CD4-positive, alpha-beta memory T cell (primary cell): ENCODE measurements at regions of chr7 and their contacts with region 1.

Region 1: GRCh38 chr7:8295638-8296361 is 33.8 kb upstream of the ICA1 start:
- DNase-seq: peak; percentile 44 to 54 (median 52)
- H3K4me3 ChIP-seq: no peak overlapping the region
- H3K4me3 Mint-ChIP-seq: no peak overlapping the region
- H3K27ac ChIP-seq: no peak overlapping the region
- H3K27ac Mint-ChIP-seq: no peak overlapping the region
- H3K4me1 ChIP-seq: no peaks in the 10 kb centered on the region
- H3K4me1 Mint-ChIP-seq: peaks cover 0 to 1% (median 0%) of the 10 kb centered on the region in 4 donors
- H3K27me3 ChIP-seq: no peaks in the 10 kb centered on the region
- H3K27me3 Mint-ChIP-seq: peaks cover 8 to 12% of the 10 kb centered on the region in 2 donors

Region 2: GRCh38 chr7:7424151-7424873 is 871.5 kb before region 1 on chr7:
- CTCF ChIA-PET with region 1: no interaction called
- POLR2A ChIA-PET with region 1: no interaction called
- intact Hi-C with region 1: loop called (anchors 10 kb)
- DNase-seq: peak in 4 of 5 donors; percentile 6 to 32 (median 29)
- H3K4me3 ChIP-seq: peak overlapping the region; percentile 33 to 41
- H3K4me3 Mint-ChIP-seq: peak overlapping the region in 7 of 8 donors; percentile 81 to 89 (median 85)
- H3K27ac ChIP-seq: no peak overlapping the region
- H3K27ac Mint-ChIP-seq: peak overlapping the region in 4 of 7 donors; percentile 17 to 71 (median 53)
- H3K4me1 ChIP-seq: no peaks in the 10 kb centered on the region
- H3K4me1 Mint-ChIP-seq: peaks cover 0 to 10% (median 6%) of the 10 kb centered on the region in 4 donors
- H3K27me3 ChIP-seq: no peaks in the 10 kb centered on the region
- H3K27me3 Mint-ChIP-seq: peaks cover 0 to 1% of the 10 kb centered on the region in 2 donors

Region 3: DNA sequence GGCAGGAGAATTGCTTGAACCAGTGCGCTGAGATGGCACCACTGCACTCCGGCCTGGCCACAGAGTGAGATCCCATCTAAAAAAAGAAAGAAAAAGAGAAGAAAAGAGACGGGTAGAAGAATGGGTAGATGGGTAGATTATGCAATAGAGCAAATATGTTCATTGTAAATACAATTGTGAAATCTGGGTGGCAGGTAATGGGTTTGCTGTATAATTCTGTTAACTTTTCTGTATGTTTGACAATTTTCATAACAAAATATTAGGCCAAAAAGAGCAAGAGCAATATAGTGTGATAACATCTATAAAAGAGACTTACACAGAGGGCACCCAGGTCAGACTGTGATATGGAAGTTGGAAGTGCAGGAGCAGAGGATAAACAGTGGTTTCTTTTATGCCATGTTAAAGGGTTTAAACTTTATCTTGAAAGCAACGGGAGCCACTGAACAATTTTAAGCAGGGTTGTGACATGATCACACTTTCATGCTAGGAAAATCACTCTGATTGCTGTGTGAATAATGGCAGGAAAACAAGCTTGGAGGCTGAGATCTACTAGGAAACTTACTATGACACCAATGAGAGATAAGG is 753.5 kb before region 1 on chr7:
- CTCF ChIA-PET with region 1: no interaction called
- POLR2A ChIA-PET with region 1: no interaction called
- intact Hi-C with region 1: loop called (anchors 5 kb)
- DNase-seq: no peak
- H3K4me3 ChIP-seq: no peak overlapping the region
- H3K4me3 Mint-ChIP-seq: no peak overlapping the region
- H3K27ac ChIP-seq: no peak overlapping the region
- H3K27ac Mint-ChIP-seq: no peak overlapping the region
- H3K4me1 ChIP-seq: no peaks in the 10 kb centered on the region
- H3K4me1 Mint-ChIP-seq: peaks cover 0 to 3% (median under 1%) of the 10 kb centered on the region in 4 donors
- H3K27me3 ChIP-seq: no peaks in the 10 kb centered on the region
- H3K27me3 Mint-ChIP-seq: peaks cover 0 to 1% of the 10 kb centered on the region in 2 donors

Region 4: DNA sequence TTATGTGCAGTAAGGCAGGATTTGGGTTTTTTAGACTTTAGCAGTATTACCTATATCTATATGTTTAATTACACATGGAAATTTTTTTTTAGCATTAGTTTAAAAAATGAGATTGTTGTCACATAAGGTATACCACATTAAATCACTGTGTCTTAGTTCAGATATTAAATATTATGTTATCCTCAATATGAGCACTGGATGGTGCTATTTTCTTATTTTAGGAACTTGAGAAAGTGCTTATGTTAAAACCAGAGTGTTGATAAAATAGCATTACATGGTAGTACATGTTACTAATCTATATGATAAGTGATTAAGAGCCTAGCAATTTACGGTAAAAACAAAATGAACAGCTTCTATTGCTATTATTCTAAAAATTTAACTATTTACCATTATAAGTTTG is 700.3 kb before region 1 on chr7:
- CTCF ChIA-PET with region 1: interaction called, 19 read pairs
- POLR2A ChIA-PET with region 1: no interaction called
- intact Hi-C with region 1: loop called (anchors 2 kb)
- DNase-seq: peak in 4 of 5 donors; percentile 30 to 36 (median 34)
- H3K4me3 ChIP-seq: no peak overlapping the region
- H3K4me3 Mint-ChIP-seq: no peak overlapping the region
- H3K27ac ChIP-seq: no peak overlapping the region
- H3K27ac Mint-ChIP-seq: no peak overlapping the region
- H3K4me1 ChIP-seq: no peaks in the 10 kb centered on the region
- H3K4me1 Mint-ChIP-seq: no peaks in the 10 kb centered on the region
- H3K27me3 ChIP-seq: no peaks in the 10 kb centered on the region
- H3K27me3 Mint-ChIP-seq: no peaks in the 10 kb centered on the region